H1 (cell line): ENCODE measurements at regions of chr14 and their contacts with region 1.

Region 1: GRCh38 chr14:54387328-54387727 is 9.5 kb upstream of the CDKN3 start:
- DNase-seq: no peak
- H3K4me3 ChIP-seq: no peak overlapping the region
- H3K27ac ChIP-seq: no peak overlapping the region
- H3K4me1 ChIP-seq: no peaks in the 10 kb centered on the region
- H3K27me3 ChIP-seq: no peaks in the 10 kb centered on the region; a peak in 1 of 7 replicates
- CTCF ChIP-seq: no peak
- EP300 ChIP-seq: no peak
- POLR2A ChIP-seq: no peak
- RAD21 ChIP-seq: no peak

Region 2: DNA sequence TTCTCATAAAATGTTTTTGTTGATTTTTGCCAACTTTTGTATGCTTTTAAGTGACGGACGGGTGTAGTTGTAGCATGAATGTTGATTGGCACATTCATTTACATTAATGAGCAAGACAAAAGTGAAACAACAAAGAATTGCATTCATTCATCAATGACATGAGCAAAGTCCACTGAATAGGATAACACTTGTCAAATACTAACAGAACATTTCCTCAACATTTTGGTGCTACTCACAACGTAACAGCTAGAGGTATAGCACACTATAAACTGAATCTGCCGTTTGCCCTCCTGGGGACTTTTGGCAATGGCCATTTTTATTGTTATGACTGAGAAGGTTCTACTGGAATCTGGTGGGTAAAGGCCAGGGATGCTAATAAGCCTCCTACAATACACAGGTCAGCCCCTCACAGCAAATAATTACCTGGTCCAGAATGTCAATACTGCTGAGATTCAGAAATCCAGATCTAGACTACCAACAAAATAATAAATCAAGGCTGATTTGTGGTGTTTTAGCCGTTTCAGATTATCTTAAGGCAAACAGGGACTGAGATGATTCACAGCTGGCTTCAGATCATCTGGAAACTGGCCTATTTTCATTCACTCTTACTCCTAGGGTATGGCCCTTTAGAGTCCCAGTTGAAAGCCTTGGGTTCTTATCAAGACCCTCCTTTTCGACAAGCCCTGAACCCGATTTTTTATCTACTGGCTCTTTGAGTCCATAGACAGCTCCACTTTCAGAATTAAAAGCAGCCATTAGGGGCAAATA is 13.0 kb before region 1 on chr14:
- CTCF ChIA-PET with region 1: interaction called, 15 read pairs
- POLR2A ChIA-PET with region 1: interaction called, 4 read pairs
- DNase-seq: peak in 1 of 2 experiments; percentile 30
- H3K4me3 ChIP-seq: no peak overlapping the region
- H3K27ac ChIP-seq: no peak overlapping the region
- H3K4me1 ChIP-seq: peaks cover 1 to 11% (median 3%) of the 10 kb centered on the region in 4 experiments; a peak in 3 of 7 replicates
- H3K27me3 ChIP-seq: no peaks in the 10 kb centered on the region
- CTCF ChIP-seq: no peak
- EP300 ChIP-seq: no peak
- POLR2A ChIP-seq: no peak
- RAD21 ChIP-seq: no peak